ENCODE measurements at regions of chr12 and their contacts with region 1.

Region 1: GRCh38 chr12:6978609-6979011 is 7.9 kb downstream of the EMG1 start:
- DNase-seq: no peak
- H3K4me3 ChIP-seq: no peak overlapping the region
- H3K27ac ChIP-seq: no peak overlapping the region
- H3K4me1 ChIP-seq: no peaks in the 10 kb centered on the region
- H3K27me3 ChIP-seq: no peaks in the 10 kb centered on the region
- CTCF ChIP-seq: no peak

Region 2: DNA sequence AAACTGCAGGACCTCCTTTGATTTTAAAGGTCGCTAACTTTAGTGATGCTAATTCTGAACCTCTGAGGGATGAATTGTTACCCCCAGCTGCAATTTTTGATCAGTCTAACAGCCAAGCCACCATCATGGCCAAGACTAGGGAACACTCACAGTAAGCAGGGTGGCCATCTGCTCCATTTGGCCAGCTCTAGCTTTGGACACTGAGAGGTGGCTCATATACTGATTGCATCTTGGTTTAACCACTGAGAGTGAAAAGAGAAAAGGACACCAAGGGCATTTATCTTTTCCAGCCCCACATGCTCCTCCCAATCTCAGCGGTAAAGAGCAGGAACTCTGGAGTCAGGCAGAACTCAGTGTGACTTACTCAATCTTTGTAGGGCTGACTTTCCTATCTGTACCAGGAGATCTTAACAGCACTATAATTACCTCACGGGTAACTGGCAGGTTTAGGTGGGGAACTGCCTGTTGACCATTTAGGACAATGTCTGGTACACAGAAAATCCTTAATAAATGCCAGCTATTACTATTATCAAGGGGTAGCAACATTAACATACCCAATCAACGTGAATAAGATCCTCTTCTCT is 33.5 kb after region 1 on chr12:
- intact Hi-C with region 1: loop called (anchors 5 kb)
- DNase-seq: no peak
- H3K4me3 ChIP-seq: no peak overlapping the region
- H3K27ac ChIP-seq: no peak overlapping the region
- H3K4me1 ChIP-seq: peaks cover 16% of the 10 kb centered on the region
- H3K27me3 ChIP-seq: no peaks in the 10 kb centered on the region
- CTCF ChIP-seq: no peak

Measured in colonic mucosa (tissue), 4 donors.